AG04450 (cell line): ENCODE measurements at regions of chr14 and their contacts with region 1.

Region 1: DNA sequence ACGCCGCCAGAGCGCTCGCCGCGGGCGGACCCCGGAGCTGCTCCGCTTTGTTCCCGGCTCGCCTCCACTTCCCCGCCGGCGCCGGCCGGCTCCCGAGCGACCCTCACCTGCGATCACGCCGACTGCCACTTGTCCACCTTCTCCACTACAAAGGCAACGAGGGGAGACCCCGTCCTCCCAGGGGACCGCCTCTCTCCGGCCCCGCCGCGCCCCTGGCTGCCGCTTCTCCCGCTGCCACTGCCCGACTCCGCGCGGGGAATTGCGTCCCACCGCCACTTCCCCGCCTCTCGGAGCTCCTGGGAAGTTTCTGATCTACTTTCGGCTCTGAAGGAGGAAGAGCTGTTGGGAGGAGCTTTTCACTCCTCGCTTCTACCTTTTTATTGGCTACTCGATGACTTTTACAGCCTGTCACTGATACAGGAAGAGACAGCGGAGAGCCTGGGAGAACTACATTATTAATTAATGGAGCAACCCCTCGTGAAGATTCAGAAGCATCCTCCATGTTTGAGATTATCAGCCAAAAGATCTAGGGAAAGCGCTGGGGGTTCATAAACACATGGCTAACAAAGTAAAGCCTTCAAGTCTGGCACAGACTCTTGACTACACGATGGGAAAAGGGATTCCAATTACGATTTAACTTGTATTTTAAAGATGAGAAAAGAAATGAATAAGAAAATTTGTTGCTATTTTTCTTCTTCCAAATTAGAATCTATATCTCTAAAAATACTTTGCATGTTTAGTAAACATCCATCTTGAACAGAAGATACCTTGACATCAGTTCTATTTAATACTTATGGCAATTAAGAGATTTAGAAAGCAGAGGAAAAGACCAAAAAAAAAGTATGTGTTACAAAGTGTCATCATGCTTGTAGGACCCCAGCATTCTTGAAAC is at the start of gene BAZ1A:
- DNase-seq: peak; percentile 68
- H3K4me3 ChIP-seq: peak within 1 kb of the TSS; percentile 80
- H3K27ac ChIP-seq: peak within 1 kb of the TSS; percentile 90
- H3K27me3 ChIP-seq: no peaks in the 10 kb centered on the region
- CTCF ChIP-seq: peak; percentile 25; the same call in 1 of the 2 replicates
- polyA plus RNA-seq, gene BAZ1A: 22.6 and 31.5 TPM in 2 replicates

Region 2: GRCh38 chr14:34733235-34733634 is 142.0 kb before region 1 on chr14:
- CTCF ChIA-PET with region 1: interaction called, 10 read pairs
- POLR2A ChIA-PET with region 1: no interaction called
- DNase-seq: no peak
- H3K4me3 ChIP-seq: no peak overlapping the region
- H3K27ac ChIP-seq: no peak overlapping the region
- H3K27me3 ChIP-seq: no peaks in the 10 kb centered on the region
- CTCF ChIP-seq: no peak

Region 3: DNA sequence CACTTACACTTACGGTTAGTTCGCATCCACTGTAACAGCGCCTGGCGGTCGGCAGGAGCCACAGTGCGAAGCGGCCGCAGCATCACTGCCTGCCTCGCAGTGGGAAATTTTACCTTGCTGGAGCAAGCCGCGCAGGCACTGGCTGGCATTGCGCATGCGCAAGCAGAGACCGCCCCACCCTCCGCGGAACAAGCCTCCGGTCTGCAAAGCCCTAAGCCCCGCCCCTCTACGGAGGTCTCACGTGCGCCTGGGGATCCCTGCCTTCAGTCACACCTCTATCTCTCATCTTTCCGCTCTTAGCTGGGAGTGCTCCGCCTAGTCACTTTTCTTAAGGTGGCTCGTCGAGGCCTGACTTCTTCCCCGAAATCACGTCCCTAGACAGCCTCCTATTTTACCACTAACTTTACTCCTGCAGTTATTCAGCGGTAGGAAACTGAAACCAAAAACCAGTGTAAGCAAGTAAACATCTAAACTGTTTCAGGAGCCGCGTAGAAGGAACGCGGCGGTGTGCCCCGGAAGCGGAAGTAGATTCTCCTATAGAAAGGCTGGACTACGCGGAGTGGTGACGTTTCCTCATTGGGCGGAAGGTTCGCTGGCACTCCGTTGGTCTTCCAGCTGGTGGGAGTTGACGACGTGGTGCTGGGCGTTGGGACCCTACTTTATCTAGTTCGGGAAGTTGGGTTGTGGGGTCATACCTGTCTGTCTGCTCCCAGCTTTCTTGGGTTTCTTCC is 107.3 kb after region 1 on chr14 and contains the start of gene SRP54:
- CTCF ChIA-PET with region 1: interaction called, 3 read pairs
- POLR2A ChIA-PET with region 1: interaction called, 25 read pairs
- DNase-seq: peak; percentile 96
- H3K4me3 ChIP-seq: peak within 1 kb of the TSS; percentile 73
- H3K27ac ChIP-seq: peak within 1 kb of the TSS; percentile 100
- H3K27me3 ChIP-seq: no peaks in the 10 kb centered on the region
- CTCF ChIP-seq: peak; percentile 41
- polyA plus RNA-seq, gene SRP54: 58.8 and 84.2 TPM in 2 replicates